Activated T-helper 1 cell treated with anti-CD3 and anti-CD28 coated beads, Interleukin-12 subunit alpha, Interleukin-12 subunit beta, Interleukin-2, Interleukin-4 antibody, amounts not matched to agents 30 ng/mL and 10 ng/mL and 1 ng/mL, durations not matched to agents 14 hours and 24 hours and 36 hours (primary cell): ENCODE measurements at regions of chr3 and their contacts with region 1.

Region 1: DNA sequence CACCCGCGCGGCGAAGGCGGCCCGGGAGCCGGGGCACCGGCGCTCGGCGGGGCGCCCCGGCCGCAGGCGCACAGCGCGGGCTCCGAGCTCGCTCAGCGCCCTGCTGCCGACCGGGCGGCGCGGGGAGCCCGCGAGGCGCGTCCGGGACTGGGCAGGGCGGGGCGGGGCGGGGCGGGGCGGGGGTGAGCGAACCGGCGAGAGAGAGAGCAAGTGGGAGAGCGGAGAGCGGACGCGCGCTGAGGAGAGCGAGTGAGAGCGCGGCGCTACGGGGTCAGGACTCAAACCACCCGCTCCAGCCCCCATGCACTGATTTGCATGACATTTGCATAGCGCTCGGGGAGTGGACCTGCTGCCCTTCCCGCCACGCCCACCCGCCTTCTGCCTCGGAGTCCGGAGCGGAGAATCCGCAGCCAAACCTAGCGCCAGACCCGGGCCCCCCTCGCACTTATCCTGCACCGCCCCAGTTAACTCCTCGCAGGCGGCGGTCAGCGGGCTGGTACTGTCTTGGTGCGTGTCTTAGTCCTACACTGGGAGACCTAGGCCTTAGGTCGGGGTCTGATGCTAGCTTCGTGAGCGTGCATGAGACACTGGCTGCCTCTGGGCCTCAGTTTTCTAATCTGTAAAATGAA is at the start of gene MYLK:
- DNase-seq: peak; percentile 49
- H3K4me3 Mint-ChIP-seq: peak within 1 kb of the TSS; percentile 79
- H3K27ac Mint-ChIP-seq: no peak within 1 kb of the TSS
- H3K4me1 Mint-ChIP-seq: peaks cover 13% of the 10 kb centered on the region
- H3K27me3 Mint-ChIP-seq: peaks cover 55% of the 10 kb centered on the region
- total RNA-seq, gene MYLK: 0.08 and 0.27 TPM in 2 replicates

Region 2: DNA sequence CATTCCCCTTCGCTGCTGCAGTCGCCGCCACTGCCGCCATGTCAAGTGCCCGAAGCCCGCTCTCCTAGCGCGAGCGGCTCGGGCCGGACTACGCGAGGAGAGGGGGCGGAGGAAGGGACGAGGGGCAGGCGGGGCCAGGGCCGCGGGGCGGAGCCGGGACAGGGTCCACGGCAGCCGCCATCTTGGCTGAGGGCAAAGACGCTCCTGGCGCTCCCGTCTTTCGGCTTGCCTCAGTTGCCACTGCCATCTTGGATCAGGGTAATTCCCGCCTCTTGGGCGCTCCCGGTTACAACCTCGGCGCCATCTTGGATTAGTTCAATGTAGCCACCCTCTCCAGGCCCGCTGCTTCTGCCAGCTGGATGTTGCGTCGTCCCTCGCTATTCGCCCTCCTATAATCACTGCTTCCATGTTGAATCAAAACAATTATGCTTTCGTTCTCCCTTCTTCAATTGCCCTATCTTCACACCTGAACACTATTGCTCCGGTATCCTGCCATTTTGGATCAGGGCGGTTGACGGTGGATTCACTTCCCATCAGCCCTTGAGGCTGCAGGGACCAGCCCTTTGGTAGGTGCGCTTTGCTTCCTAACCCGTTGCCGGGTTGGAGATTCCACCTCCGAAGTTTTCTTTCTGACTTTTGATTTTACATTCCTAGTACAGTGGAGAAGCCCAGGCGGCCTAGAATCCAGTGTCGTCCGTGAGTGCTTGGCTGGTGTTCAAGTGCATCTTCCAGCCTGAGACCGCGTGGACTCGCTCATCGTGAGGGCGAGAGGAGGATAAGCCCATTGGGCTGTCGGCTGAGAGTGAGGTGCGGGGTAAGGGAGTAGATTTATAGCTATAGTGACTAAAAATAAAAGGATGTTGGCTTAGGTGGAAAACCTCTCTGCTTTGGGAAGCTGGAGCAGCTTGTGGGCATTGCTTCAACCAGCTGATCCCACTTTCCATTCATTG is 299.1 kb before region 1 on chr3 and contains the start of gene HACD2:
- intact Hi-C with region 1: loop called (anchors 10 kb)
- DNase-seq: peak; percentile 93
- H3K4me3 Mint-ChIP-seq: no peak within 1 kb of the TSS
- H3K27ac Mint-ChIP-seq: peak within 1 kb of the TSS; percentile 63
- H3K4me1 Mint-ChIP-seq: peaks cover 23% of the 10 kb centered on the region
- H3K27me3 Mint-ChIP-seq: no peaks in the 10 kb centered on the region
- total RNA-seq, gene HACD2: 31.5 TPM in 2 replicates

Region 3: GRCh38 chr3:123907720-123908119 is 23.4 kb after region 1 on chr3:
- intact Hi-C with region 1: no loop called
- DNase-seq: no peak
- H3K4me3 Mint-ChIP-seq: no peak overlapping the region
- H3K27ac Mint-ChIP-seq: peak overlapping the region; percentile 11
- H3K4me1 Mint-ChIP-seq: no peaks in the 10 kb centered on the region
- H3K27me3 Mint-ChIP-seq: no peaks in the 10 kb centered on the region